Left ventricle myocardium superior (tissue), 1 donor: ENCODE measurements at regions of chr3 and their contacts with region 1.

Region 1: DNA sequence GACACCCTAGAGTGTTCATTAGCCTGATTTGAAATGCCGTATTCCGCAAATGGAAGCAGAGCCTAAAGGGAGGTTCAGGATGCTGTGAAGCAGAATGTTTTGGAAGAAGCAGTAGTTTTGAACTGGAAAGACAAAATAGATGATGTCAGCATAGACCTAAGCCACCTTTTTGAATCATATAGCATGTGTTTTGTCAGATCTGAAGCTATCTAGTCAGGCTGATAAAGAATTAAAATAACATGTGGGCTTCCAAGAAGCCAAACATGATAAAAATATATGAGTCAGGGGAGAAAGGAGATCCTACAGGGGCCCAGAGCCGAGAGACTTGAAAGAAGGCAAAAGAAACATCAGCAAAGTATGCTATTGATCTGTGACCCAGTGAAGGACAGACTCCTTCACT is 47.2 kb upstream of the RASA2 start:
- DNase-seq: no peak
- ATAC-seq: no peak

Region 2: GRCh38 chr3:141401573-141402475 is 37.8 kb before region 1 on chr3:
- intact Hi-C with region 1: loop called (anchors 2 kb)
- DNase-seq: peak; percentile 79
- ATAC-seq: peak; percentile 74

Region 3: DNA sequence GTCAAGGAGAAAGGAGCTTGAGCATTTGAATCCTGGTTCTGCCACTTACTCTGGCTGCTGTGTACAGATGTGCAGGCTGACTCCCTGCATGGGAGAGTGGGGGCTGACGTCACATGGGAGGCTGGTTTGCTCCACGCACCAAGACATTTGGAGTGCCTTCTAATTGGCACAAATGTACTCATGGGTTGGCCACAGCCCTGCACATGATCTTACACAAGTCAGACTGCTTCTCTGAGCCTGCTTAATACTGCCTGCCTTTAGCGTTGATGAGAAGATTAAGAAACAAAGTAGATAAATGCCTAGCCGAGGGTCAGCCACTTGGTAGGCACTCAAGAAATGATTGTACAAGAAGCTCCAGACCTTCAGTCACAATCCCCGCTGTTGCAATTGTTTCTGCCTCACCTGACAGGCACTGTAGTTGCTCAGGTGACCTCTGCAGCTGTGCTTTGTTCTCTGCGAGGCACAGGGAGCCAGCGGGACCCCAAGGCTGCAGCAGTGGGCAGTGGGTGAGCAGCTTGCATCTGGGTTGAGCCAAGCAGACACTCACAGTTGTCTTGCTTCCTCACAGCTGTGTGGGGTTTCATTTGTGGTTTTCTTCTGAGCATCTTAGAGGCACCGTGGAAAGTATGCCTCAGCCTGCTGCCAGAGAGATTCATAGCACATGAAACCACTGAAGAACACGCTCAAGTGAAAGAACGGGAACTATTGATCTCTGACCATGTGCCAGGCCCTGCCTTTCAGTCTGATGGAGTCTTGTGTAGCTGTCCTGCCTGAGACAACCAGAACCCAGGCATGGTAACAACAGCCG is 356.7 kb after region 1 on chr3:
- intact Hi-C with region 1: no loop called
- DNase-seq: peak; percentile 77
- ATAC-seq: peak; percentile 75